OCI-LY7 (cell line): ENCODE measurements at regions of chr9 and their contacts with region 1.

Region 1: DNA sequence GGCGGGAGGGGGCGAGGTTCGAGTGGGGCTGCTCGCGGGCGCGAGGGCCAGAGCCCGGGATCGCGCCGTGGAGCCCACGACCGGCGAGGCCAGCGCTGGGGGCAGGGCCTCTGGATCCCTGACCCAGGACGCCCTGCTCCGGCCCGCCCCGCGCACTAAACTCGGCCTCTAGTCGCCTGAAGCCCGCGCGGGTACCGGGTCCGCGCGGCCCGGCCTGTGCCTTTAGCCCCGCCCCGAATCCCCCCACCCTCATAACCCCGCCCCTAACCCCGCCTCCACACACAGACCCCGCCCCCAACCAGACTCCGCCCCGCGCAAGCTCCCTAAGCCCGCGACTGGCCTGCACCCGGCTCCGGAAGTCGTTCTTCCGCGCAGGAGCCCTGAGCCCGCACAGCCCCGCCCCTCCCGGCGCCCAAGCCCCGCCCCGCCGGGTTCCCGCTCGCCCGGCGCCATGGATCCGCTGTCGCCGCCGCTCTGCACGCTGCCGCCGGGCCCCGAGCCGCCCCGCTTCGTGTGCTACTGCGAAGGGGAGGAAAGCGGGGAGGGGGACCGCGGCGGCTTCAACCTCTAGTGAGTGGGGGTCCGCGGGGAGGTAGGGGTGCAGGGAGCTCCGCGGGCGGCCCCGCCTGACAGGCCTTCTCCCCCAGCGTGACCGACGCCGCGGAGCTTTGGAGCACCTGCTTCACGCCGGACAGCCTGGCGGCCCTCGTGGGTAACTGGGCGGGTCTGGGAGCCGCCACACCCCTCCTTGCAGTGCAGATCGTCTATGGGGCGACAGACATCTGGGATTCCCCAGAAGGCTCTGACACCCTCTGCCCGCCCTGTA is at the start of gene PAXX:
- DNase-seq: peak; percentile 94
- H3K4me3 ChIP-seq: peak within 1 kb of the TSS; percentile 79
- H3K27ac ChIP-seq: peak within 1 kb of the TSS; percentile 63
- H3K4me1 ChIP-seq: peaks cover 28% of the 10 kb centered on the region
- CTCF ChIP-seq: no peak
- total RNA-seq, gene PAXX: 63.5 and 66.5 TPM in 2 replicates

Region 2: DNA sequence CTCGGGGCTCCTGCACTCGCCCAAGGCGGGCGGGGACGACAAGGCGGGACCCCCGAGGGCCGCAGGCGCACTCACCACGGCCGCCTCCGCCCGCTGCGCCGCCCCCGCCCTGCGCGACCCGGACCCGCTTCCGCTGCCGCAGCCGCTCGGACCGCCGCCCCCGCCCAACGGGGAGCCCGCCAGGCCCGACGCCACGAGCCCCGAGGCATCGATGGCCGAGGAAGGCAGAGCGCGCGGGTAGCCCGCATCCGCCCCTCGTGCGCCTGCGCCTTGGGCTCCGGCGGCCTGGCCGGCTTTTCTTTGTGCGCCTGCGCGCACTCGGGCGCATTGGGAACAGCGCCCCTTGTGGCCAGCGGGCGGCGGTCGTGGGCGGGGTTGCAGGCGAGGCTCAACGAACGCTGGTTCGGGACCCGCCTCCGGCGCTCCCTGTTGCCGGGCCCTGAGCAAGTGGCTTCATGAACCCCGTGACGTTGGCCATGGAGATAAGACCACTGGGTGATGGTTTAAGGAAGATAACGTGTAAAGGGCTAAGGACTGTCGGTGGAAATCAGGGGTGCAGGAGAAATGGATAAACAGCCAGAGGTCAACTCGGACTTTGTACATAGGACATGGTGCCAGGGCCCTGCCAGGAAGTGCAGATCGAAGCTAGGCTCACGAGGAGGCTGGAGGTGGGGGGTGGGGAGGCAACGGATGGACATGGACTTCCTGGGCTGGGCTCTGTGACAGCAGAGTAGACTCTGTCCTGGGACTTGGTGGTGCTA is 47.5 kb before region 1 on chr9 and contains the starts of genes C8G and FBXW5:
- CTCF ChIA-PET with region 1: no interaction called
- POLR2A ChIA-PET with region 1: no interaction called
- intact Hi-C with region 1: loop called (anchors 2 kb)
- DNase-seq: peak; percentile 98
- H3K4me3 ChIP-seq: peak within 1 kb of the TSS; percentile 82
- H3K27ac ChIP-seq: peak within 1 kb of the TSS; percentile 40
- H3K4me1 ChIP-seq: peaks cover 29% of the 10 kb centered on the region
- CTCF ChIP-seq: peak; percentile 86
- total RNA-seq, gene C8G: 0.95 and 1.0 TPM in 2 replicates
- total RNA-seq, gene FBXW5: 78.7 and 89.6 TPM in 2 replicates

Region 3: DNA sequence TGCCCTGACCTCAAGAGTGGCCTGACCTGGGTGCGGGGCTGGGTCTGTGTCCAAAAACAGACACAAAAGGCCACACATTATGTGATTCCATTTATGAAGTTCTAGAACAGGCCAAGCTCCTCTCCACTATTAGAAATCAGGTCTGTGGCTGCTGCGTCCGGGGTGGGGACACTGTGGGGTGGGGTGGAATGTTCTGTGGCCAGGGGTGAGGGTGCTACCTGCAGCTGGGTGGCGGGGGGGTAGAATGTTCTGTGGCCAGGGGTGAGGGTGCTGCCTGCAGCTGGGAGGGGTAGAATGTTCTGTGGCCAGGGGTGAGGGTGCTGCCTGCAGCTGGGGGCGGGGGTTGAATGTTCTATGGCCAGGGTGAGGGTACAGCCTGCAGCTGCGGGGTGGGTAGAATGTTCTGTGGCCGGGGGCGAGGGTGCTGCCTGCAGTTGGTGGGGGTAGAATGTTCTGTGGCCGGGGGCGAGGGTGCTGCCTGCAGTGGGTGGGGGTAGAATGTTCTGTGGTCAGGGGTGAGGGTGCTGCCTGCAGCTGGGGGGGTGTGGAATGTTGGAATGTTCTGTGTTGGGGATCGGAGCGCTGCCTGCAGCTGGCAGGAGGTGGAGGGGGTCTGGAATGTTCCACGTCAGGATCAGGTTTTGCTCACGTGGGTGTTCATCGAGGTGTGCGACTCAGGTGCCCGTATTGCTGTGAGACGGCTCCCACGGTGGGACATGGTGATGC is 31.8 kb before region 1 on chr9:
- CTCF ChIA-PET with region 1: interaction called, 14 read pairs
- POLR2A ChIA-PET with region 1: interaction called, 4 read pairs
- intact Hi-C with region 1: no loop called
- DNase-seq: no peak
- H3K4me3 ChIP-seq: no peak overlapping the region
- H3K27ac ChIP-seq: no peak overlapping the region
- H3K4me1 ChIP-seq: no peaks in the 10 kb centered on the region
- CTCF ChIP-seq: no peak

Region 4: DNA sequence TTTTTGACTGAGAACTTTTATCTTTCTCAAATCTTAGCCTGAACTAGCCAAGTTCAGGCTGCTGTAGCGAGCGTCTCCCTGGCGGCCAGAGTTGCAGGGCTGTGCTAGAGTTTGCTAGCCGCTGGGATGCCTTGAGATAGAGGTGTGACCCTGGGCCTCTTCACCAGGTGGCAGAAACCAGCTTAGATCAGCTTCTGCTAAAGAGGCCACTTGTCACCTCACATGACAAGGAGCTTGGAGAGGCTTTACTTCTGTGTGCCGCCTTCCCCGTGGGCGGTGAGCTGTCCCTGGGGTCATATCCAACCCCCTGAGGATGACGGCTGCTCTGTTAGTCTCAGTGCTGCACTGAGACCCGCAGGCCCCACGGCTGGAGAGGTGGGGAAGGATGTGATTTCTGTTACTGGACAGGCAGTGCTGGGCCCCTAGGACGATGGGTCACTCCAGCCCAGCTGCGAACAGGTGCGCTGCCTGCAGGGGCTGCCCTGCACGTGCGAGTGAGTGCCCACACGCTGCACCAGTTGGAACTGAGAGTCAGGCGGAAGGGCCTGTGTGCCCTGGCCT is 690.3 kb after region 1 on chr9:
- CTCF ChIA-PET with region 1: interaction called, 11 read pairs
- POLR2A ChIA-PET with region 1: no interaction called
- intact Hi-C with region 1: no loop called
- DNase-seq: peak; percentile 83
- H3K4me3 ChIP-seq: peak overlapping the region; percentile 53
- H3K27ac ChIP-seq: peak overlapping the region; percentile 96
- H3K4me1 ChIP-seq: peaks cover 86% of the 10 kb centered on the region
- CTCF ChIP-seq: no peak; the same call in 1 of the 2 replicates